GM23248 (cell line): ENCODE measurements at regions of chr9 and their contacts with region 1.

Region 1: DNA sequence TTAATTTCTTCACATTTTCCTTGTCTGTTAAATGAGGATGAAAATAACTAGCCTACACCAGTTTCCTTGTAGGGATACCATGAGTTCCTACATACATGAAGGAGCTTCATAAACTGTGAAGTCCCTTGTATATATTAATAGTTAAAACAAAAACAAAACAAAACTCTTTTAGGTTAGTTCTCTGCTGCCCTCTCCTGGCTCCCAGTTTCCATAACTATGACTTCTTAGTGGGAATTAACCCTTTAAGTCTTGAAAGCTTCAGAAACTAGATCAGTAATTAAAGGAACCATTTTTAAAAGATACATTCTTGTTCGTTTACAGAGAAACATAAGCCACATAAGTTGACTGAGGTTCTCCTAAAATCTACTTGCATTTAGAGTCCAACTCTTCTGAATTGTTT is 500.0 kb upstream of the C9orf72 start:
- DNase-seq: peak; percentile 72
- H3K4me3 ChIP-seq: no peak overlapping the region
- H3K27ac ChIP-seq: no peak overlapping the region
- H3K4me1 ChIP-seq: no peaks in the 10 kb centered on the region
- H3K27me3 ChIP-seq: no peaks in the 10 kb centered on the region

Region 2: GRCh38 chr9:27333241-27334052 is 739.8 kb before region 1 on chr9:
- in situ Hi-C with region 1: loop called (anchors 25 kb)
- DNase-seq: peak; percentile 70
- H3K4me3 ChIP-seq: no peak overlapping the region
- H3K27ac ChIP-seq: no peak overlapping the region
- H3K4me1 ChIP-seq: no peaks in the 10 kb centered on the region
- H3K27me3 ChIP-seq: peaks cover 8% of the 10 kb centered on the region

Region 3: DNA sequence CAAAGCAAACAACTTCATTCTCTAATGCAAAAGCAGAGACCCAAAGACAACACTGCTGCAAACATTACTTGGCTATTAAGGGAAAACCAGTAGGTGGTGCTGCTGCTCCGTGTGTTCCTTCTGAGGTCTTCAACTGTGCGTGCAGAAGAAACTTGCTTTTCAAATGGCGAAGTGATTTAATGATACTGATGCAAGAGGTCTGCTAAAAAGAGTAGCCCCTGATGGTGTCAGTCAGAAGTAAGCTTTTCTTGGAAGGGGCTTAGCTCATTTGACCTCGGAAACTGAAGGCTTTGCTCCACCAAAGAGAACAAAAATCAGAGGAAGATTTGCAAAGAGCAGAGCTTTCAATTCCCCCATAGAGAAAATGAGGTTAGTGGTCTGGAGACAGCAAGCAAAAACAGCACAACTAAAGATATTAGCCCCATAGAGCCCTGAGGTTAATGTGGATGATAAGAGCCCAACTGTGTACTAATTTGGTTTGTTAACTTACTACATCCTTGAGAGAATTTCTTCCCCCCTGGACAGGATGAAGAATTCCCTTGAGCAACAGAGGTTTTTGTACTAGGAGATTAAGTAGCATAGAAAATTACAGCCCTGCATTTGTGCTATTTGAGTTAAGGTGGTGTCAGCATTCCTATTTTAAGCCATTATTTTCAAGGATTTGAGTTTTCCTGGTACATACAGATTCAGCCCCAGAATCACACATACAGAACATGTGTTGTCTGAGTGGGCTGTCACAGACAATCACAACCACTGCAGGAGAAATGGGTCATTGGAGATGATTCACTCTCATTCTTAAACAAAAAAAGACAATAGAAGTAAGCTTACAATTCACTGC is 346.8 kb before region 1 on chr9:
- in situ Hi-C with region 1: loop called (anchors 10 kb)
- DNase-seq: peak; percentile 71
- H3K4me3 ChIP-seq: no peak overlapping the region
- H3K27ac ChIP-seq: no peak overlapping the region
- H3K4me1 ChIP-seq: no peaks in the 10 kb centered on the region
- H3K27me3 ChIP-seq: no peaks in the 10 kb centered on the region

Region 4: DNA sequence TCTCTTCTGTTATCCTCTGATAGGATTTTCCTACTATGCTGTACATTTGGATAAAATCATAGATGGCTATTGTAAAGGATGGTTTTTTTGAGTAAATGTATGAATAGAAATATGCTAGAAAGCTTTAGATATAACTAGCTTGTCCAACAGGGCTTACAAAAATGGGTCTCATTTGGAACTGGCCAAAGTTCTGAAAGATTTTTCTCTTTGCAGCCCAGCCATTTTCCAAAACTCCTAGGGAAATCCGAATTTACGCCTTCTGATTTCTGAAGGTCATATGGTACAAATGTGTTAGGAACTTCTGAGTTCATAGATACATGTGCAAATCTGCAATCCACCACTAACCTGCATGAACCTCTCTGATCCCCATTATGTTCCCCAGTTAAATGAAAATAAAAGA is 103.9 kb after region 1 on chr9:
- in situ Hi-C with region 1: no loop called
- DNase-seq: no peak
- H3K4me3 ChIP-seq: no peak overlapping the region
- H3K27ac ChIP-seq: no peak overlapping the region
- H3K4me1 ChIP-seq: no peaks in the 10 kb centered on the region
- H3K27me3 ChIP-seq: no peaks in the 10 kb centered on the region